ENCODE measurements at regions of chr16 and their contacts with region 1.

Region 1: DNA sequence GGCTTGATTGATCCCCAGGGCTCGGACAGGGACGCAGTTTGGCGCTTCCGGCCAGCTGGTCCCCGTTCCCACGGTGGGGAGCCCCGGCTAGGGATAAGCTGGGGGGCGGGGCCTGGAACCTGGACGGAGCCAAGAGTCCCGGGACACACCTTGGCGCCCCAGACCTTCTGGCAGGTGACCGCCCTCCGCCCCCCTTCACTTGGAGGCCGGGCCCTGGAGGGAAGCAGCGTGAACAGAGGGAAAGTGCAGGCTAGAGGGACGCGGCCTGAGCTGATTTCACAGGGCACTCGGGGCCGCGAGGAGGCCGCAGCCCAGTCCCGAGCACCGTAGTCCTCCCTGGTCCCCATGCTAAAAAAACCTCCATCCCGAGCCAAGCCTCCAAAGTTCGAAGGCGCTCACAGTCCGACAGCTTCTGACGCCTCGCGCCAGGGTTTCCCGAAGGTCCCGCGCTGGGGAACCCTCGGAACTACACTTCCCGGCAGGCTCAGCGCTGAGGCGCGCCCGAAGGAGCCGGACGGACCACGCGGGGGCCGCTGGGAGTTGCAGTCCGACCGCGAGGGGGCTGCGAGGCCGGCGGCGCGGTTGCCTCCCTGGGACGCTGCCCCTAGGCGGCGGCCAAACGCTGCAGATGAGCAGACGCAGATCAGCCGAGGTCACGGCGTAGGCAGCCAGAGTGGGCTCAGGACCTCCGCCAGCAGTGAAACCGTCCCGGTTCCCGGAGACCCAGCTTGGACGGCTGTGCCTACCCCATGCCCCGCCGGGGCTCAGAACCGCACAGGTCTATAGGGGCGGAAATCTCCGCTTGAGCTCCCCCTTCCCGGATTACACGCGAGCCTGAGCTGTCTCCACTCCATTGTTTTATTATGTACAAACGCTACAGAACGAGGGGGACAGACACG is at the start of gene TBX6:
- DNase-seq: peak; percentile 97
- ATAC-seq: peak; percentile 93
- total RNA-seq, gene TBX6: 0.51 TPM

Region 2: DNA sequence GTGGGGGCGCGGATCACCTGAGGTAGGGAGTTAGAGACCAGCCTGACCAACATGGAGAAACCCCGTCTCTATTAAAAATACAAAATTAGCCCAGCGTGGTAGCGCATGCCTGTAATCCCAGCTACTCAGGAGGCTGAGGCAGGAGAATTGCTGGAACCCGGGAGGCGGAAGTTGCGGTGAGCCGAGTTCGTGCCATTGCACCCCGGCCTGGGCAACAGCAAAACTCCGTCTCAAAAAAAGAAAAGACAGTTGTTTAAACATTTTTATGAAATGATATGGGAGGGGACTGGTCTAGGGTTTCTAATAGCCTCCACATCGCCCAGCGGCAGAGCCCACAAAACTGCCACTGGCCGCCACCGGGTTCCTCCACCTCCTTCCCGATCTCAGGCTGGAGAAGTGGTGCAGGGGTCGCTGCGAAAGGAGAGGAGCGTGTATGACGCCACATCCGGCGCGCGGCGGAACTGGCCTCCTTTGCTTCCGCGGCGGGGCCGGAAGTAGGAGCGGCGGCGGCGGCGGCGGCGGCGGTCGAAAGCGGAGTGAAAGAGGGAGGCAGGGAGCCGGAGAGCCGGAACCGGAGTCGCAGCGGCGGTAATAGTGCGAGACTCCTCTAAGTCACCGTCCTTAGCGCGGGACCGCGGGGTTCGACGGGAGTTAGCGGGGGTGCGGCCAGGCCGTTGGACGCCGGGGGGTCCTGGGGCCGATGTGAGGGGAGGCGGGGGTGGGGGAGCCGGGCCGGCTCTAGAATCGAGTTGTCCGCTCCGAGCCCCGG is 16.0 kb before region 1 on chr16 and contains the start of gene PPP4C:
- intact Hi-C with region 1: loop called (anchors 2 kb)
- DNase-seq: peak; percentile 97
- ATAC-seq: peak; percentile 90
- total RNA-seq, gene PPP4C: 37.8 TPM

Region 3: DNA sequence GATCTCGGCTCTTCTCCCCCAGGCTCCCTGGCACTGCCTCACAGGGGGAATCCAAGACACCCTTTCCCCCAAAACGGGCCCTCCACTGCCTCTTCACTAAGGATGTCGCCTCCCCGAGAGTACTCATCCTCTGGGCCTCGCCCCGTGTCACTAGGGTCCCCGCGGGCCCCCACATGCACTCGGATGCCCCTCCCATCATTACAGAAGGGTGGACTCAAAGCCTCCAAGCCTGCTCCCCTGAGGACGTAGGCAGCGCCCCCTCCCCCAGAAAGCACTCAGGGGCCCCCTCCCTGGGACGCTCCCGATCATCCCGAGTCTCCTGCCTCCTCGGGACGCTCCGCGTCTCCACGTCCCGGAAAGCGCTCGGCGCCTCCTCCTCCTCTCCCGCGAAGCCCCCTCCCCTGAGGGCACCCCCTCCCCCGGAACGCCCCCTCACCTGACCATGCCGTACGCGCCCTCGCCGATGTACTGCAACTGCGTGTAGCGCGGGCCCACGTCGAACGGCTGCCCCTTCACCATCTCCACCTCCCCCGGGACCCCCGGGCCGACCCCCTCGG is 31.0 kb after region 1 on chr16:
- intact Hi-C with region 1: loop called (anchors 1 kb)
- DNase-seq: no peak
- ATAC-seq: peak; percentile 4

Region 4: GRCh38 chr16:30407102-30407803 is 315.5 kb after region 1 on chr16 and contains the start of gene ZNF771:
- intact Hi-C with region 1: loop called (anchors 5 kb)
- DNase-seq: peak; percentile 97
- ATAC-seq: peak; percentile 97
- total RNA-seq, gene ZNF771: 5.1 TPM